Activated CD4-positive, alpha-beta T cell treated with anti-CD3 and anti-CD28 coated beads for 36 hours (primary cell): ENCODE measurements at regions of chr6 and their contacts with region 1.

Region 1: GRCh38 chr6:147202516-147203312 is 1.5 kb upstream of the STXBP5 start:
- DNase-seq: peak; percentile 87
- ATAC-seq: peak; percentile 88
- H3K4me3 Mint-ChIP-seq: peak overlapping the region; percentile 87
- H3K27ac Mint-ChIP-seq: peak overlapping the region; percentile 98
- H3K4me1 Mint-ChIP-seq: peaks cover 24% of the 10 kb centered on the region
- H3K27me3 Mint-ChIP-seq: no peaks in the 10 kb centered on the region

Region 2: GRCh38 chr6:145814501-145815308 is 1388.0 kb before region 1 on chr6 and contains the start of gene FBXO30:
- CTCF ChIA-PET with region 1: no interaction called
- POLR2A ChIA-PET with region 1: no interaction called
- intact Hi-C with region 1: loop called in 1 of 2 experiments (anchors 5 kb)
- DNase-seq: peak; percentile 90
- ATAC-seq: peak; percentile 77
- H3K4me3 Mint-ChIP-seq: peak within 1 kb of the TSS; percentile 89
- H3K27ac Mint-ChIP-seq: peak within 1 kb of the TSS; percentile 89
- H3K4me1 Mint-ChIP-seq: peaks cover 37% of the 10 kb centered on the region
- H3K27me3 Mint-ChIP-seq: no peaks in the 10 kb centered on the region
- total RNA-seq, gene FBXO30: 2.3 to 2.8 TPM

Region 3: GRCh38 chr6:146850238-146850896 is 352.3 kb before region 1 on chr6:
- CTCF ChIA-PET with region 1: no interaction called
- POLR2A ChIA-PET with region 1: interaction called, 3 read pairs
- intact Hi-C with region 1: loop called in 1 of 2 experiments (anchors 2 kb)
- DNase-seq: peak; percentile 70
- ATAC-seq: peak; percentile 75
- H3K4me3 Mint-ChIP-seq: no peak overlapping the region
- H3K27ac Mint-ChIP-seq: peak overlapping the region; percentile 80
- H3K4me1 Mint-ChIP-seq: peaks cover 38% of the 10 kb centered on the region
- H3K27me3 Mint-ChIP-seq: peaks cover 4% of the 10 kb centered on the region

Region 4: GRCh38 chr6:146950351-146950835 is 252.3 kb before region 1 on chr6:
- CTCF ChIA-PET with region 1: no interaction called
- POLR2A ChIA-PET with region 1: no interaction called
- intact Hi-C with region 1: loop called in 1 of 2 experiments (anchors 2 kb)
- DNase-seq: peak; percentile 18
- ATAC-seq: peak; percentile 95
- H3K4me3 Mint-ChIP-seq: no peak overlapping the region
- H3K27ac Mint-ChIP-seq: peak overlapping the region; percentile 55
- H3K4me1 Mint-ChIP-seq: peaks cover 15% of the 10 kb centered on the region
- H3K27me3 Mint-ChIP-seq: no peaks in the 10 kb centered on the region

Region 5: DNA sequence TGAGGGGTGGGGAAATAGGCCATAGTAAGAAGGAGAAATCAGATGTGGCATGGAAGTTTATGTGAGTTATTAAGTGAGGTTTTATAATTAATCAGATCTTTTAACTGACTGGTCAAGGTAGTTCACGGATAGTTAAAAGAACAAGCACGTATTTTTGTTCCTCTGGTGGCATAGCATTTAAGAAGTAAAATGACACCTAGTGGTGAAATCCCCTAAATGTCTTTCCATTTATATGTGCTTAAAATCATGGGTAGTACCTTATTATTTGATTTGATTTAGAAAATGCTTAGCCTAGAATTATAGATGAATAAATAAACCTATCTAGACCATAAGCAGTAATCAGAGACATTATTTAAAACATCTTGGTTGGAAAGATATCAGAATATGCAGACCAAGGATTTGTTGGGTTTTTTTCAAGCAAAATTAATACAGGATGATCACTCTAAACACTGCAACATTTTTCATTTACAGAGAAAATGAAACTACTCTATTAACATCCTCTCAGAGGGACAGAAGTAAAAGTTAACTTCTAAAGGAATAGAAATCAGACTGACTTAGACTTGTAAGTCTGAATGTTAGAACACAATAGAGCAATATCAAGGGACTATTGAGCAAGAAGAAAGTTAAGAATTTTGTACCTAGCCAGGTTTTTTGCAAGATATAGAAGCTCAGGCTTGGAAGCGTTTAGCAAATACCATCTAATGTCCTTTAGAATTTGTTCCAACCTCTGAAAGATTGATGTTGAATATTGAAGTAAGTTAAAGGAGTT is 82.6 kb after region 1 on chr6:
- CTCF ChIA-PET with region 1: no interaction called
- POLR2A ChIA-PET with region 1: no interaction called
- intact Hi-C with region 1: loop called (anchors 2 to 5 kb)
- DNase-seq: no peak
- ATAC-seq: peak; percentile 33
- H3K4me3 Mint-ChIP-seq: no peak overlapping the region
- H3K27ac Mint-ChIP-seq: peak overlapping the region; percentile 7
- H3K4me1 Mint-ChIP-seq: peaks cover 38% of the 10 kb centered on the region
- H3K27me3 Mint-ChIP-seq: no peaks in the 10 kb centered on the region

Region 6: GRCh38 chr6:148203970-148204369 is 1001.3 kb after region 1 on chr6:
- CTCF ChIA-PET with region 1: no interaction called
- POLR2A ChIA-PET with region 1: no interaction called
- intact Hi-C with region 1: loop called in 1 of 2 experiments (anchors 10 kb)
- DNase-seq: peak; percentile 85
- ATAC-seq: peak; percentile 88
- H3K4me3 Mint-ChIP-seq: peak overlapping the region; percentile 66
- H3K27ac Mint-ChIP-seq: peak overlapping the region; percentile 59
- H3K4me1 Mint-ChIP-seq: peaks cover 38% of the 10 kb centered on the region
- H3K27me3 Mint-ChIP-seq: peaks cover 75% of the 10 kb centered on the region